Activated CD4-positive, alpha-beta T cell treated with anti-CD3 and anti-CD28 coated beads for 36 hours (primary cell): ENCODE measurements at regions of chr14 and their contacts with region 1.

Region 1: DNA sequence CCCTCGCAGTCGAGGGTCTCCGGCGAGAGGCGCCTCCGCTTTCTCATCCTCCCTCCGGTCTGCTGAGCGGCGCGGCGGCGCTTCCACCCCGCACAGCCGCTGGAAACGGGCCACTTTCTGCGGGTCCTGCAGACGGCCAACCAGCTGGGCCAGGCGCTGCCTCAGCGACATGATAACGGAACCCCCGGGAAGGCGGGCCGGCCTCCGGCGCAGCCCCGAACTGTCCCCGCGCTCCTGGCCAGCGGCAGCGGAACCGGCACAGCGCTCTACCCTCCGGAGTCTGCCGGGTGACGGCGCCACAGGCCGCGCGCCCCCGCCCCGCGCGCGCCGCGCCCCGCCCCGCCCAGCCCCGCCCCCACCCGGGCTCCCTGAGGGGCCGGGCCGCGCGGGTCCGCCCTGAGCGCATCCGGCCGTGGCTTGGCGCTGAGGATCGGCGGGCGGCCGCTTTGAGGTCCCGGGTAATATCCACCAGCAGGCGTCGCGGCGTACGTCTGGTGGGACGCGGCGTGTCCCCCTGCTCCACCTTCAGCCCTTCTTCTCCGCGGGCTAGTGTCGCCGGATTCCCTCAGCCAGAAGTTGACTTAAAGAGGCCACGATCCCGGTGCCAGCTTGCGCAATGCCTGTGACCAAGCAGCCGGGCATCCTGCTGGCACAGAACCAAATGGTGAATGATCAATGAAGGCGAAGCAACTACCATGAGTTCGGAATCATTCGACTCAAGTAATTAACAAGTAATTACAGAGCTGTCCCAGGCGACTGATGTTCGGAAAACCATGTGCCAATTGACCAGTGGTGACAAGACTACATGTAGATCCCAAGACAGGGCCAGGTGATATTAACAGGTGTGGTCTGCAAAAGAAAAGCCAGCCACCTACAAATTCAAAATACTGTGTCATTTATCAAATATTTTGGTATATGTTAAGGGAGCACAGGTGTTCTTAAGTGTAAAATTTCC is at the start of gene SGPP1:
- DNase-seq: peak; percentile 87
- ATAC-seq: peak; percentile 91
- H3K4me3 Mint-ChIP-seq: peak within 1 kb of the TSS; percentile 99
- H3K27ac Mint-ChIP-seq: peak within 1 kb of the TSS; percentile 96
- H3K4me1 Mint-ChIP-seq: peaks cover 30% of the 10 kb centered on the region
- H3K27me3 Mint-ChIP-seq: no peaks in the 10 kb centered on the region
- total RNA-seq, gene SGPP1: 8.6 to 10.4 TPM

Region 2: GRCh38 chr14:63543000-63543825 is 184.8 kb before region 1 on chr14 and contains the start of gene PPP2R5E:
- CTCF ChIA-PET with region 1: no interaction called
- POLR2A ChIA-PET with region 1: interaction called, 3 read pairs
- intact Hi-C with region 1: loop called in 1 of 2 experiments (anchors 1 kb)
- DNase-seq: peak; percentile 98
- ATAC-seq: peak; percentile 99
- H3K4me3 Mint-ChIP-seq: peak within 1 kb of the TSS; percentile 86
- H3K27ac Mint-ChIP-seq: peak within 1 kb of the TSS; percentile 85
- H3K4me1 Mint-ChIP-seq: peaks cover 26% of the 10 kb centered on the region
- H3K27me3 Mint-ChIP-seq: no peaks in the 10 kb centered on the region
- total RNA-seq, gene PPP2R5E: 38.4 to 40.4 TPM

Region 3: GRCh38 chr14:63624203-63624602 is 103.8 kb before region 1 on chr14:
- CTCF ChIA-PET with region 1: no interaction called
- POLR2A ChIA-PET with region 1: no interaction called
- intact Hi-C with region 1: no loop called
- DNase-seq: no peak
- ATAC-seq: no peak
- H3K4me3 Mint-ChIP-seq: no peak overlapping the region
- H3K27ac Mint-ChIP-seq: no peak overlapping the region
- H3K4me1 Mint-ChIP-seq: peaks cover 23% of the 10 kb centered on the region
- H3K27me3 Mint-ChIP-seq: no peaks in the 10 kb centered on the region

Region 4: DNA sequence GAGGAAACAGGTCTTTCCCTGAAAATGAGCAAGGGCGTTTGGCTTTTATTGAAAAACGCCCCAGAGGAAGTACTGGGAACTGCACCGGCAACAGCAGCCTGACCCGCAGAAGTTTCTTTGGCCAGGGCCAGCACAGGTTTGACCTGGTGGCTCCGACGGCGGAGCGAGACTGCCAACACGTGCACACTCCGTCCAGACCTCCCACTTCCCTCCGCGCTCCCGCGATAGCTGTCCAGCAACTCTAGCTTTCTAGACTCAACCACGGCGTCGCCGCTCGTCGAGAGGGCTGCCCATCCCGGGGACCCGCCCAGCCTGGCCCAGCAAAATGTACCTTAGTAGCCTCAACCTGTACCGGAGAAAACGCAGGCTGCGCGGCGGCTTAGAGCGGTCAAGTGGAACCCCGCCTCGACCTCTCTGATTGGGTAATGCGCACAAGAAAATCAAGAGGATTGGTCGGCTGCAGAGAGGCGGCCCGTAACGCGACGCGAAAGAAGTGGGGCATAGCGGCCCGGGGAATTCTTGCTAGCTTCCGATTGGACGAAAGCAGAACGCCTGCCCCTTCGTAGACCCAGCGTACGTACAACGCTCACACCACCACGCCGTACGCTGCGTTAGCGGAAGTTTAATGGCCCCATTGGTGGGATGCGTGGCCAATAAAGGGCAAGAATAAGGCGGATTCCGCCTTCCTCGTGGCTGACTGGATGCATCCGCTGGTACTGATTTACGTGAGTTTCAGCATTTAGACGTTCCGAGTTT is 86.4 kb before region 1 on chr14 and contains the start of gene WDR89:
- CTCF ChIA-PET with region 1: interaction called, 4 read pairs
- POLR2A ChIA-PET with region 1: no interaction called
- intact Hi-C with region 1: loop called (anchors 1 kb)
- DNase-seq: peak; percentile 98
- ATAC-seq: peak; percentile 87
- H3K4me3 Mint-ChIP-seq: peak within 1 kb of the TSS; percentile 79
- H3K27ac Mint-ChIP-seq: peak within 1 kb of the TSS; percentile 97
- H3K4me1 Mint-ChIP-seq: peaks cover 43% of the 10 kb centered on the region
- H3K27me3 Mint-ChIP-seq: no peaks in the 10 kb centered on the region
- total RNA-seq, gene WDR89: 13.9 to 27.2 TPM

Region 5: GRCh38 chr14:63713765-63714164 is 14.3 kb before region 1 on chr14:
- CTCF ChIA-PET with region 1: interaction called, 10 read pairs
- POLR2A ChIA-PET with region 1: interaction called, 3 read pairs
- intact Hi-C with region 1: no loop called
- DNase-seq: no peak
- ATAC-seq: no peak
- H3K4me3 Mint-ChIP-seq: no peak overlapping the region
- H3K27ac Mint-ChIP-seq: no peak overlapping the region
- H3K4me1 Mint-ChIP-seq: peaks cover 34% of the 10 kb centered on the region
- H3K27me3 Mint-ChIP-seq: no peaks in the 10 kb centered on the region

Region 6: DNA sequence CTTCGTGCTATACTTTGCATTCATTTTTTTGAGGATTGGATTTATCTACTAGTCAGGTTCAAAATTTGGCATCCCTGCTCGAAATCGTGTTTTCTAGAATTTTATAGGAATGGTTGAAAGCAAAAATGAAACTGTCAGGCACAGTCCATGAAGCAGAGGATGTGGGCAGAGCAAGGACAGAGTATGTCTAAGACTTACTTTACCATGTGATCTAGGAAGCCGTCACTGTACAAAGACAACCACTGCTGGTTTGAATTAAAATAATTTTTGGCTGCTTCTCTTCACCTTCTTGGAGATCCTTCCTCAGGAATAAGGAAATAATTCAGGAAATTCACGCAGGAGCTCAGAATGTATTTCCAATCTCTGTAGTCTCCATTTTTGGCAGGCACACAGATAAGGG is 31.4 kb after region 1 on chr14:
- CTCF ChIA-PET with region 1: no interaction called
- POLR2A ChIA-PET with region 1: no interaction called
- intact Hi-C with region 1: loop called in 1 of 2 experiments (anchors 2 kb)
- DNase-seq: peak; percentile 17
- ATAC-seq: peak; percentile 92
- H3K4me3 Mint-ChIP-seq: peak overlapping the region; percentile 57
- H3K27ac Mint-ChIP-seq: peak overlapping the region; percentile 93
- H3K4me1 Mint-ChIP-seq: peaks cover 12% of the 10 kb centered on the region
- H3K27me3 Mint-ChIP-seq: no peaks in the 10 kb centered on the region

Region 7: DNA sequence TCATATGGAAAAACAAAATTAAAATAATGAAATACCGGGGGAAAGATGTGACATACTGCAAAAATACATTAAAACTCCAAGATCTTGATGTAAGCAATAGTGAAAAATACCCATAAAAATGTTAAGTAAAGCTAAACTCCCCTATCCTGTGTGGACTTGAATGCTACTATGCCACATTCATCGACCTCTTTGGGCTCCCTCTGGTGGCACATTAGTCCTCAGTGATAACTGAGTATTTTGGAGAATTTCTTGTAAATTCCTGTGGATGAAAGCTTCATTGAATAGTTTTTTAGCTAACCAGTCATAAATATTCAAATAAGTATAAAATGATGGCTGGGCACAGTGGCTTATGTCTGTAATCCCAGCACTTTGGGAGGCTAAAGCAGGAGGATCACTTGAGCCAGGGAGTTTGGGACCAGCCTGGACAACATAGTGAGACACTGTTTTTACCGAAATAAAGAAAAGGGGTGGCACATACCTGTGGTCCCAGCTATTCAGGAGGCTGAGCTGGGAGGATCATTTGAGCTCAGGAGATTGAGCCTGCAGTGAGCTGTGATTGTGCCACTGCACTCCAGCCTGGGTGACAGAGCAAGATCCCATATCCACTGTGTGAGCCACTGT is 42.2 kb after region 1 on chr14:
- CTCF ChIA-PET with region 1: interaction called, 4 read pairs
- POLR2A ChIA-PET with region 1: no interaction called
- intact Hi-C with region 1: loop called in 1 of 2 experiments (anchors 1 kb)
- DNase-seq: peak; percentile 64
- ATAC-seq: peak; percentile 78
- H3K4me3 Mint-ChIP-seq: no peak overlapping the region
- H3K27ac Mint-ChIP-seq: no peak overlapping the region
- H3K4me1 Mint-ChIP-seq: peaks cover 2% of the 10 kb centered on the region
- H3K27me3 Mint-ChIP-seq: no peaks in the 10 kb centered on the region

Region 8: GRCh38 chr14:64338616-64339316 is 610.7 kb after region 1 on chr14:
- CTCF ChIA-PET with region 1: no interaction called
- POLR2A ChIA-PET with region 1: no interaction called
- intact Hi-C with region 1: loop called in 1 of 2 experiments (anchors 2 kb)
- DNase-seq: peak; percentile 92
- ATAC-seq: peak; percentile 88
- H3K4me3 Mint-ChIP-seq: peak overlapping the region; percentile 93
- H3K27ac Mint-ChIP-seq: peak overlapping the region; percentile 87
- H3K4me1 Mint-ChIP-seq: peaks cover 18% of the 10 kb centered on the region
- H3K27me3 Mint-ChIP-seq: no peaks in the 10 kb centered on the region